Heart right ventricle (tissue), 16 donors: ENCODE measurements at regions of chr2 and their contacts with region 1.

Region 1: GRCh38 chr2:105576440-105577252 is 168.1 kb upstream of the NCK2 start:
- DNase-seq: peak in 1 of 2 donors; percentile 47
- ATAC-seq: peak; percentile 39 to 77 (median 62)
- H3K4me3 ChIP-seq: no peak overlapping the region
- H3K27ac ChIP-seq: peak overlapping the region in 7 of 10 donors; percentile 4 to 54 (median 43)
- H3K4me1 ChIP-seq: peaks cover 4 to 30% (median 12%) of the 10 kb centered on the region in 9 donors
- H3K27me3 ChIP-seq: peaks cover 0 to 3% (median 0%) of the 10 kb centered on the region in 7 donors
- CTCF ChIP-seq: peak; percentile 37 to 79 (median 65)

Region 2: DNA sequence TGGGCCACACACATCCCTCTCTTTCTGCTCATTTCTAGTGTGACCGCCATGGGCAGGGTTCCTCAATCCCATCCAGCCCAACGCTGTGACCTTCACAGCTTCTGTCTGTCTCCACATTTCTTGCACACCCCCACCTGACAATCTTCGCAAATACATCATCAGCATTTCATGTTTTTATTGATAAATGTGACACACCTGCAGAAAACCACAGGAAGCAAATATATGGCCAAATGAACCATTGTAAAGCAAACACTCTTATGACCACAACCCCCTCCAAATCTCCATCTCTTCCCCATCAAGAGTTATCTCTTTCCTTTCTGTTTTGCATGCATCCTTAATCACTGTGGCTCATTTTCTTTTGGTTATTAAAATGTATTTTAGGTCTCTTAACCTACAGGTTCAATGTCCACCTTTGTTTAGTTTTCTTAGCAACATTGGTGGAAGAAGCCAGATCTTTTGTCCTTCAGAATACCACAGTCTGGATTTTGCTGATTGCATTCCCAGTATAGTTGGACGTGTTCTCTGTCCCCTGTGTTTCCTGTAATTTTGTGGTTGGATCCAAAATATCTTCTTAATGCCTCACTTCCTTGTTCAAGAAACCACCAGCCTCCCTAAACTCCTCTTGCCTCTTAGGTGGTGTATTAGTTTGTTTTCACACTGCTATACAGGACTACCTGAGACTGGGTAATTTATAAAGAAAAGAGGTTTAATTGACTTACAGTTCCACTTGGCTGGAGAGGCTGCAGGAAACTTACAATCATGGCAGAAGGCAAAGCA is 158.3 kb after region 1 on chr2:
- intact Hi-C with region 1: loop called in 4 of 10 experiments (anchors 5 to 10 kb)
- DNase-seq: no peak
- ATAC-seq: peak in 6 of 8 donors; percentile 38 to 72 (median 58)
- H3K4me3 ChIP-seq: no peak overlapping the region
- H3K27ac ChIP-seq: peak overlapping the region in 4 of 10 donors; percentile 10 to 72 (median 28)
- H3K4me1 ChIP-seq: peaks cover 3 to 51% (median 38%) of the 10 kb centered on the region in 9 donors
- H3K27me3 ChIP-seq: no peaks in the 10 kb centered on the region
- CTCF ChIP-seq: no peak

Region 3: GRCh38 chr2:105749583-105750400 is 173.1 kb after region 1 on chr2:
- intact Hi-C with region 1: loop called in 6 of 10 experiments (anchors 2 to 10 kb)
- DNase-seq: no peak
- ATAC-seq: peak in 1 of 8 donors; percentile 20
- H3K4me3 ChIP-seq: peak overlapping the region in 1 of 10 donors; percentile 7
- H3K27ac ChIP-seq: peak overlapping the region in 1 of 10 donors; percentile 94
- H3K4me1 ChIP-seq: peaks cover 13 to 84% (median 69%) of the 10 kb centered on the region in 9 donors
- H3K27me3 ChIP-seq: no peaks in the 10 kb centered on the region
- CTCF ChIP-seq: no peak

Region 4: DNA sequence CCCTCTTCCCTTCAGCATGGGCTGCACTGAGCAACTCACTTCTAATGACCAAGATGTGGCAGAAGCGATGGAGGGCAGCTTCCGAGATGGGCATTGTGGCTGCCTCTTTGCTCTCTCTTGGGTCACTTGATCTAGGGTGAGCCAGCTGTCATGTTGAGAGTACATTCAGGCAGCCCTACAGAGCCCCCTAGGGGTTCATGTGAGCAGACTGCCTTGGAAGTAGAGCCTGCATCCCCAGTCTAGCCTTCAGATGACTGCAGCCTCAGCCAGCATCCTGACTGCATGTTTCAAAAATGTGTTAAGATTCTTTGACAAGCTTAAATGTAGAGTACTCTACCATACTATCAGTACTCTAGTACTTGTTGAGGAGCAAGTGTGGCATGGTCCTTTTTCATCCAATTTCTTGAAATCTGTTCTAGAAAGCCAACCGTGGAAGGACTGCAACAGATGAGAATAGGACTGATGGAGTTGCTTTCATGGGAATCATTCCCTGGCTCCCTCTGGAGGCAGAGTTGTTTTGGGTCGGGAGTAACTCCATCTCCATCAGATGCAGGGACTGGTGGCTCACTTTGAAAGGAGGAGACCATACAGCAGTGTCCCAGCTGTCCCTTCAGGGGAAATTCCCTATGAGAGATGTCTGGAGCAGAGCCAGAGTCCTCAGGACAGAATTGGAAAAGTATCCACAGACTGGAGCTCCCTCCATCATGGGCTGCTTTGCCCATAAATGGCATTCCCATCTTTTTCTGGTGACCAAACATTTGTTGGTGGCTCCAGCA is 312.2 kb after region 1 on chr2:
- intact Hi-C with region 1: loop called in 2 of 10 experiments (anchors 10 kb)
- DNase-seq: peak in 1 of 2 donors; percentile 58
- ATAC-seq: peak in 7 of 8 donors; percentile 10 to 59 (median 37)
- H3K4me3 ChIP-seq: no peak overlapping the region
- H3K27ac ChIP-seq: peak overlapping the region in 4 of 10 donors; percentile 2 to 75 (median 6)
- H3K4me1 ChIP-seq: peaks cover 8 to 71% (median 50%) of the 10 kb centered on the region in 9 donors
- H3K27me3 ChIP-seq: no peaks in the 10 kb centered on the region
- CTCF ChIP-seq: peak in 1 of 9 donors; percentile 28

Region 5: DNA sequence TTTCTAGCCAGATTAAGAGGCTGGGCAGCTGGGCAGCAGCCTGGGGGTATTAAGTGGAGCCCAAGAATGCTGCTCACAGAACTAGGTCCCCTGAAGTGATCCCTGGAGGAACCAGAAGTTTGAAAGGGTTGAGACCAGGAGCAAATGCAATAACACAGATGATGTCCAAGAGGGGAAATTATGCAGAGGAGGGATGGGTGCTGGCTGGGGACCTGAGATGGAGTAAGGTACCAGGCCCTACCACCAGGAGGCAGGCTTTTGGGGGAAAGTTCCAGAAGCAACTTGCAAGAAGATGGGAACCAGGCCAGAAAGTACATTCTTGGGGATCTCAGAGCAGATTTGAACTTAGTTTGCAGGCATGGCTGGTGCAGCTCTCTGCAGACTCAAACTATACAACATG is 343.2 kb after region 1 on chr2:
- intact Hi-C with region 1: loop called in 1 of 10 experiments (anchors 10 kb)
- DNase-seq: no peak
- ATAC-seq: peak in 2 of 8 donors; percentile 15 to 37
- H3K4me3 ChIP-seq: no peak overlapping the region
- H3K27ac ChIP-seq: peak overlapping the region in 4 of 10 donors; percentile 30 to 65 (median 56)
- H3K4me1 ChIP-seq: peaks cover 0 to 31% (median 16%) of the 10 kb centered on the region in 9 donors
- H3K27me3 ChIP-seq: no peaks in the 10 kb centered on the region
- CTCF ChIP-seq: peak; percentile 19 to 50 (median 38)

Region 6: GRCh38 chr2:106085181-106085940 is 508.7 kb after region 1 on chr2:
- intact Hi-C with region 1: loop called in 9 of 10 experiments (anchors 2 to 10 kb)
- DNase-seq: peak in 1 of 2 donors; percentile 61
- ATAC-seq: peak in 7 of 8 donors; percentile 31 to 89 (median 76)
- H3K4me3 ChIP-seq: no peak overlapping the region
- H3K27ac ChIP-seq: peak overlapping the region in 1 of 10 donors; percentile 16
- H3K4me1 ChIP-seq: peaks cover 0 to 5% (median 0%) of the 10 kb centered on the region in 9 donors
- H3K27me3 ChIP-seq: no peaks in the 10 kb centered on the region
- CTCF ChIP-seq: peak in 8 of 9 donors; percentile 26 to 71 (median 54)